CD8-positive, alpha-beta memory T cell (primary cell): ENCODE measurements at regions of chr13 and their contacts with region 1.

Region 1: GRCh38 chr13:51614350-51614786 is 30.1 kb downstream of the WDFY2 start:
- DNase-seq: peak in 4 of 5 donors; percentile 10 to 52 (median 40)
- H3K4me3 ChIP-seq: peak overlapping the region; percentile 61
- H3K4me3 Mint-ChIP-seq: peak overlapping the region; percentile 53 to 92 (median 86)
- H3K27ac ChIP-seq: peak overlapping the region; percentile 18
- H3K27ac Mint-ChIP-seq: peak overlapping the region; percentile 37 to 98 (median 96)
- H3K4me1 ChIP-seq: peaks cover 11% of the 10 kb centered on the region
- H3K4me1 Mint-ChIP-seq: peaks cover 13 to 23% (median 21%) of the 10 kb centered on the region in 3 donors
- H3K27me3 ChIP-seq: no peaks in the 10 kb centered on the region
- H3K27me3 Mint-ChIP-seq: no peaks in the 10 kb centered on the region

Region 2: GRCh38 chr13:51397262-51397941 is 217.0 kb before region 1 on chr13:
- CTCF ChIA-PET with region 1: no interaction called
- POLR2A ChIA-PET with region 1: interaction called, 11 read pairs
- DNase-seq: no peak
- H3K4me3 ChIP-seq: no peak overlapping the region
- H3K4me3 Mint-ChIP-seq: peak overlapping the region in 1 of 7 donors; percentile 29
- H3K27ac ChIP-seq: no peak overlapping the region
- H3K27ac Mint-ChIP-seq: peak overlapping the region in 6 of 8 donors; percentile 8 to 74 (median 23)
- H3K4me1 ChIP-seq: peaks cover 12% of the 10 kb centered on the region
- H3K4me1 Mint-ChIP-seq: peaks cover 66 to 75% (median 72%) of the 10 kb centered on the region in 3 donors
- H3K27me3 ChIP-seq: no peaks in the 10 kb centered on the region
- H3K27me3 Mint-ChIP-seq: no peaks in the 10 kb centered on the region